ENCODE measurements at regions of chr7 and their contacts with region 1.

Region 1: DNA sequence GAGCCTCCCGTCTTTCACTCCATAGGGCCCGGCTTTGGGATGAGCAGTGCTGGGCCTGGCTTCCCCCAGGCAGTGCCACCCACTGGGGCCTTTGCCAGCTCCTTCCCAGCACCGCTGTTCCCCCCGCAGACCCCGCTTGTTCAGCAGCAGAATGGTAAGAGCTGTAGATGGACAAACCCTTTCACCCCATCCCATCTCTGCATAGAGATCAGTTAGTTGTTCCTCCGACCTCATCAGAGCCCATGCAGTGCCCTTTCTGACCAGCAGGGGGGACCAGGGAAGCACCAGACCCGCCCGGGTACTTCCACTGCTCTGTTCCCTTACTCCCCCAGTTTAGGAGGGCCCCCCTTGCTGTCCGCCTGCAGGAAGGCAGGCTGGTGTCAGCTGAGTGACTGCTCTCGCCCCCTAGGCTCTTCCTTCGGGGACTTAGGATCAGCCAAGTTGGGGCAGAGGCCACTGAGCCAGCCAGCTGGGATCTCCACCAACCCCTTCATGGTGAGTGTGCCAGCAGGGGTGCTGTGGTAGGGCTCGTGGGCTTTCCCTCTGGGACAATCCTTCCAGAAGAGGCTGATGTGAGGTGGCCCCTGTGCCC is 9.8 kb downstream of the SAP25 start:
- DNase-seq: peak; percentile 75
- H3K4me3 ChIP-seq: no peak overlapping the region
- H3K27ac ChIP-seq: no peak overlapping the region
- H3K4me1 ChIP-seq: peaks cover 27% of the 10 kb centered on the region
- CTCF ChIP-seq: peak; percentile 93

Region 2: GRCh38 chr7:100469227-100470044 is 94.5 kb before region 1 on chr7:
- CTCF ChIA-PET with region 1: no interaction called
- POLR2A ChIA-PET with region 1: no interaction called
- intact Hi-C with region 1: loop called (anchors 1 kb)
- DNase-seq: peak; percentile 75
- H3K4me3 ChIP-seq: no peak overlapping the region
- H3K27ac ChIP-seq: no peak overlapping the region
- H3K4me1 ChIP-seq: peaks cover 10% of the 10 kb centered on the region
- CTCF ChIP-seq: peak; percentile 87

Region 3: GRCh38 chr7:100586266-100587025 is 22.5 kb after region 1 on chr7 and contains the start of gene FBXO24:
- CTCF ChIA-PET with region 1: interaction called, 4 read pairs
- POLR2A ChIA-PET with region 1: interaction called, 3 read pairs
- intact Hi-C with region 1: loop called (anchors 1 kb)
- DNase-seq: peak; percentile 100
- H3K4me3 ChIP-seq: peak within 1 kb of the TSS; percentile 91
- H3K27ac ChIP-seq: peak within 1 kb of the TSS; percentile 92
- H3K4me1 ChIP-seq: peaks cover 29% of the 10 kb centered on the region
- CTCF ChIP-seq: no peak
- total RNA-seq, gene FBXO24: 0.16 TPM in 1 of 2 replicates, not detected in the other

Measured in OCI-LY7 (cell line).